ENCODE measurements at regions of chrX and their contacts with region 1.

Region 1: GRCh38 chrX:39859991-39860861 is 237.5 kb downstream of the BCOR start:
- DNase-seq: peak; percentile 81
- H3K4me3 Mint-ChIP-seq: peak overlapping the region; percentile 45
- H3K27ac Mint-ChIP-seq: peak overlapping the region; percentile 99
- H3K4me1 Mint-ChIP-seq: peaks cover 43% of the 10 kb centered on the region
- H3K27me3 Mint-ChIP-seq: no peaks in the 10 kb centered on the region

Region 2: DNA sequence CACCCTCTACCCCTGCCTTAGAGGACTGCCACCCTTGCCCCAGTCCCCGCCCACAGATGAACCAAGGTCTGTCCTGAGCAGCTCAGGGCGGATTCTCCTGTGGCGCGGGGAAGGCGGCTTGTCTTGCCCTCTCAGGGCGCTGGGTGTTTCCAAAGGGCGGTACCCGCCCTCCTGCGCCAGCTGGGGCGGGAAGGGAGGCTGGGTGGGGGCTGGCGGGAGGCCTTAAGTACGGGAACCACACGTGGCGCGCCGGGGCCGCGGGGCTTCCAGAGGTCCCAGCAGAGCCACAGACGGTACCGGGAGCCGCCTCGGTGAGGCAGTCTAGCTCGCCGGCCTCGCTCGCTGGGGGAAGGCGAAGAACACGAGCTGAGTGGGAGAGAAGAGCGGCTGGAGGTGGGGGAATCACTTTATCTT is 697.9 kb before region 1 on chrX:
- intact Hi-C with region 1: loop called (anchors 5 kb)
- DNase-seq: peak; percentile 24
- H3K4me3 Mint-ChIP-seq: peak overlapping the region; percentile 56
- H3K27ac Mint-ChIP-seq: peak overlapping the region; percentile 98
- H3K4me1 Mint-ChIP-seq: peaks cover 65% of the 10 kb centered on the region
- H3K27me3 Mint-ChIP-seq: no peaks in the 10 kb centered on the region

Region 3: DNA sequence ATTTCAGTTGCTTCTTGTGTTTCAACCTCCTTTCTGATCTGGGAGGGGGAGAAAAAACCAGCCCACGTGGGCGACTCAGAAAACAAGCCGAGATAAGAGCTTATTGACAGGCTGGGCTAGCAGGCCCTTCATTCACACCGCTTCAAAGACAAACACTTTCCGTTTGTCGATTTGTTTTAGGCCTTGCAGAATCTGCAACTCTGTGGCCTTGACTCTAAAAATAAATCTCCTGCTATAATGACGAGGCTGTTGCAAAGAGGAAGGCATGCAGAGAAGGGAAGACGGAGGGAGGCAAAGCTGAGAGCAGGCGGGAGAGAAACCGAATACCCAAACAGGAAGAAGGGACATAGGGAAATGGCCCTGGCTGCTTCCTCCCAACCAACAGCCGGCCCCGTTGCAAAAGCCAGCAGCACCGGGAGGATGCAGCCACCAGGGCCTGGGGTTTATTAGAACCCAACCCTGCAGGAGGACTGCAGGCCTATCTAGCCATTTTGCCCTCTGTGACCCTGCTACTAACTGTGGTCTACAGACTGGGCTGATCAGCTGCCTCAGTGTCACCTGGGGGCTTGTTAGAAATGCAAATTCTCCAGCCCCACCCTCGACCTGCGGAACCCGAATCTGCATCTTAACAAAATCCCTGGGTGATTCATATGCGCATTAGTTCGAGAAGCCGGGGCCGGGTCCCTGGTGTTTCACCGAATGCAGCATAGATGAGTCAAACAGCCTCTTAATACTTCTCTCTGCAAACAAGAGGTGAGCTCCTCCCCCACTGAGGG is 88.0 kb before region 1 on chrX:
- intact Hi-C with region 1: loop called (anchors 1 kb)
- DNase-seq: peak; percentile 37
- H3K4me3 Mint-ChIP-seq: peak overlapping the region; percentile 69
- H3K27ac Mint-ChIP-seq: peak overlapping the region; percentile 99
- H3K4me1 Mint-ChIP-seq: peaks cover 45% of the 10 kb centered on the region
- H3K27me3 Mint-ChIP-seq: no peaks in the 10 kb centered on the region

Region 4: GRCh38 chrX:39874202-39874816 is 14.1 kb after region 1 on chrX:
- intact Hi-C with region 1: loop called (anchors 1 kb)
- DNase-seq: peak; percentile 64
- H3K4me3 Mint-ChIP-seq: peak overlapping the region; percentile 7
- H3K27ac Mint-ChIP-seq: peak overlapping the region; percentile 89
- H3K4me1 Mint-ChIP-seq: peaks cover 31% of the 10 kb centered on the region
- H3K27me3 Mint-ChIP-seq: no peaks in the 10 kb centered on the region

Region 5: DNA sequence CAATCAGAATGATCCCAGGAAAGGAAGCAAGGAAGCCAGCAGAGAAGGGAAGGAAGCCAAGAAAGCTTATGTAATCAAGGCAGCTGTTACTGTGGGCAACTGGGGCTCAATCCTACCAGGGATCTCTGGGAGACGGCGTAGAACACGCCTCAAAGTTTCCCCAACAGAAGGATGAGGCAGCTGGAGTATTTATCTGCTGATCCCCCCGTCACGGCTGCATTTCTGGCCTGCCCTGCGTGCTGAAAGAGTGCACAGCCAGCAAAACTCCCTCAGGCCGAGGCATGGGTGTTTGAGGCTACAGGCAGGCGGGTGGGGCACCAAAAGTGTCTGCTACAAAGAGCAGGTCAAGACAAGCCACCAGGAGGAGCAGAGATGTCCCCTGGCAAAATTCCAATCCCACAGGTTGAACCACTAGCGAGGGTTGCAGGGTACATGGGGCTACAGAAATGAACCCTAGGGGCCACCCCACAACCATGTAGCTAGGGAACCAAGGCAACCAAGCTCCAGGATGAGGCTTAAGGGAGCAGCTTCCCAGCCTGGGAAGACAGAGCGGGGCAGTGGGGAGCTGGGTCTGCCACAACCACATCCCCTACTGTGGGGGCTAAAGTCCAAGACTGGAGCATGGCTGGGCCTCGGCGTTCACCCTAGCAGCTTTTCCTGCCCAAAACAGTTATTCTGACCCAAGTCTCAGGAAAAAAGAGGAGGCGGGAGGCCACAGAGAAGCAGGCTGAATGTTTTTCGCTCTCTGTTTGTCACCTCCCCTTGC is 124.1 kb after region 1 on chrX:
- intact Hi-C with region 1: no loop called
- DNase-seq: no peak
- H3K4me3 Mint-ChIP-seq: no peak overlapping the region
- H3K27ac Mint-ChIP-seq: no peak overlapping the region
- H3K4me1 Mint-ChIP-seq: peaks cover 4% of the 10 kb centered on the region
- H3K27me3 Mint-ChIP-seq: no peaks in the 10 kb centered on the region

Region 6: DNA sequence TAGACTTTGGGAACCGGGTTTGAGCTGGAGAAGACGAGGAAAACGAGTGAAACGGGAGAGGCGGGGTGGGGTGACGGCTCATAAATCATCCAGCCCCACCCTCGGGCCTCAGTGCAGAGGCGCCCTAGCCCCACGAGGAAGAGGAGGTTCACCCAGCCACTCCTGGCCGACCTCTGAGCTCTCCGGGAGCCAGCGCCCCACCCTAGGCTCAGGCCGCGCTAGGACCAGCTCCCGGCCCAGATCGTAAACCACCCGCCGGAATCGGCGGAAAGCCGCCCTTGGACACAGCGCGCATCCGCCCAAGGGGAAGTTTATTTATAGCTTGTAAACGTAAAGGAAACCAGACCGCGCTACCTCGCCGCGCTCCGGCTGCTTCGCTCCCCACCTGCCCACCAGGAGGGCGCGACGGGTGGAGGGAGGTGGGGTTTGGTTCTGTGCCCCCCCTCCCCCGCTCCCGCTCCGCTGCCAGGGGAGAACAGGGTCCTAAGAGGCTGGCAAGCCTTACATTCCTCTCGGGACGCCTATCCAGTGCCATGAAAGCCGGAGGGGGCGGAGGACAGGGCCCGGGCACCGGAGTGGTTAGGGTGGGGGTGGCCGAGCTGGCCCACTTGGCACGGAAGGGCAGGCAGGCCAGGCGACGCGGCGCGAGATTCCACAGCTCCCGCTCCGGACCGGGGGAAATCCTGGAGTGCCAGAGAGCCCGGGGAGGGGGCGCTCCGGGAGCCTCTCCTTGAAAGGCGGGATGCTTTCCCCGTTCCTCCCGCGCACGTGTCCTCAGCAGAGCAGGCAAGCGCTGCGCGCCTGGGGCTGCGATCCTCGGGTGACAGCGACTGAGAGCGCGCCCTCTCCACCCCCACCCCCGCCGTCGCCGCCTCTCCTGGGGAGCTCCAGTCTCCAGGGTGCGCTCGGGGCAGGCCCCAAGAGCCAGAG is 153.3 kb after region 1 on chrX:
- intact Hi-C with region 1: loop called (anchors 2 kb)
- DNase-seq: peak; percentile 41
- H3K4me3 Mint-ChIP-seq: peak overlapping the region; percentile 73
- H3K27ac Mint-ChIP-seq: peak overlapping the region; percentile 87
- H3K4me1 Mint-ChIP-seq: peaks cover 18% of the 10 kb centered on the region
- H3K27me3 Mint-ChIP-seq: peaks cover 11% of the 10 kb centered on the region